A549 (cell line): ENCODE measurements at regions of chr7 and their contacts with region 1.

Region 1: DNA sequence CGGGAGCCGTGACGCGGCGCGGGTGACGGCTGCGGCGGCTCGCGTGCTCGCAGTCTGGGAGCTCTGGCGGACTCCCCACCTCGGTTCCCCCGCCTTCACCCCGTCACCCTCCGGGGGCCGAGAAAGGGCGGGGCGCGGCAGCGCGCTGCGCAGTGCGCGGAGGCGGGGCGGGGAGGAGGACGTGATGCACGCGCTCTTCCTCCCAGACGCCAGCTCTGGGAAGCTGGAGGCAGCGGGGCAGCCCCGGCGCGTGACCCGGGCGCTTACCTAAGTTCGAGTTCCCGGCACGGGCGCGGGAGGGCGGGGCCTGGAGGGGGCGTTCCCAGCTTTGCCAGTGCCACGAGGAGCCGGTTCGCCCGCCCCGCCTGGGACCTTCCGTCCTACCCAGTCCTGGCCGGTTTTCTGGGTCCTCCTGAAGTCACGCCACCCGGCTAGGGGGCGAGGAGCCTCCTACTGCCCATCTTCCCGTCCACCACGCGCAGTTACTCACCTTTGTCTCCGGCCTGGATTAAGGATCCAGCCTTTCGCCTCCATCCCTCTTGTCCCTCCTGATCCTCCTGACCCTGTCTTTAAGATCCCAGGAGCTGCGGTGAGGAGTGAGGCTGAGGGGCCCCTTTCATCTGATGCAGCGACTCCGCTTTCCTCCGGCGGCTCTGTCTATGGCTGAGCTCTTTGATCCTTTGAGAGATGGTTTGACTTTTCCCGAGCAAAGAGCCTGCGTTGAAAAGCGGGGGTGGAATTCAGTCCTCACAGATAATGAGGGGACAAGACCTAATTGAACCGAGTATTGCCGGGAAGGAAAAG is 470 bp upstream of the NAMPT start:
- DNase-seq: peak; percentile 77 to 99
- ATAC-seq: peak; percentile 86 to 90
- H3K4me3 ChIP-seq: peak overlapping the region; percentile 70
- H3K27ac ChIP-seq: peak overlapping the region; percentile 92 to 98
- H3K4me1 ChIP-seq: peaks cover 30% of the 10 kb centered on the region
- CTCF ChIP-seq: no peak
- EP300 ChIP-seq: no peak; a peak in 1 of 5 replicates
- POLR2A ChIP-seq: peak; percentile 46
- RAD21 ChIP-seq: no peak

Region 2: GRCh38 chr7:106166655-106167342 is 118.5 kb before region 1 on chr7:
- CTCF ChIA-PET with region 1: no interaction called
- POLR2A ChIA-PET with region 1: no interaction called
- DNase-seq: peak; percentile 68 to 76
- ATAC-seq: peak; percentile 70 to 92; a peak in 4 of 6 replicates
- H3K4me3 ChIP-seq: no peak overlapping the region
- H3K27ac ChIP-seq: no peak overlapping the region
- H3K4me1 ChIP-seq: no peaks in the 10 kb centered on the region
- CTCF ChIP-seq: peak; percentile 87
- EP300 ChIP-seq: no peak
- POLR2A ChIP-seq: no peak
- RAD21 ChIP-seq: peak; percentile 72 to 78

Region 3: DNA sequence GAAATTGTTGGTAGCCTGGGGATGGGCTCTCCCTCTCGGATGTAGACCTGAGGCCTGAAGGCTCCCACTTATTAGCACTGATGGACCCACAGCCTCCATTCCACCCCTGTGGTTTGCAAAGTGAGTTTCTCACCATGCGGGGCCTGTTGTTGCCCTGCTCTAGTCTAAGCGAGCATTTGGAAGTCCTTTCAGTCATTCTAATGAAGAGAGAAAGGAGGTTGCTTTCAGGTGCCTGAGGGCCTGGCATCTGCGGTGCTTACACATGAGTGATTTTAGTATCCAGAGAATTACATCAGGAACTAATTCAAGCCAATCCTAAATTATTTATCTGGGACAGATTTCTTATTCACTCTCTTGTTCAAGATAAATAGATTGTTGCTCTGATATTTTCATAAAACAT is 62.1 kb before region 1 on chr7:
- CTCF ChIA-PET with region 1: no interaction called
- POLR2A ChIA-PET with region 1: no interaction called
- DNase-seq: no peak
- ATAC-seq: no peak
- H3K4me3 ChIP-seq: no peak overlapping the region
- H3K27ac ChIP-seq: no peak overlapping the region; a peak in 1 of 6 replicates
- H3K4me1 ChIP-seq: no peaks in the 10 kb centered on the region
- CTCF ChIP-seq: no peak
- EP300 ChIP-seq: no peak
- POLR2A ChIP-seq: no peak
- RAD21 ChIP-seq: no peak

Region 4: GRCh38 chr7:106270122-106270977 is 14.9 kb before region 1 on chr7:
- CTCF ChIA-PET with region 1: interaction called, 3 read pairs
- POLR2A ChIA-PET with region 1: interaction called, 14 read pairs
- DNase-seq: no peak
- ATAC-seq: peak in 1 of 2 experiments; percentile 30; a peak in 3 of 6 replicates
- H3K4me3 ChIP-seq: no peak overlapping the region
- H3K27ac ChIP-seq: 0 out of 6 replicates have a peak overlapping the region, but pooled peaks of 1 of the 2 experiments have one; percentile 30
- H3K4me1 ChIP-seq: peaks cover 26% of the 10 kb centered on the region; the same call in 1 of the 3 replicates
- CTCF ChIP-seq: no peak
- EP300 ChIP-seq: no peak
- POLR2A ChIP-seq: no peak
- RAD21 ChIP-seq: no peak

Region 5: GRCh38 chr7:106377847-106378361 is 92.7 kb after region 1 on chr7:
- CTCF ChIA-PET with region 1: no interaction called
- POLR2A ChIA-PET with region 1: interaction called, 20 read pairs
- DNase-seq: peak; percentile 36 to 95
- ATAC-seq: peak; percentile 92 to 96
- H3K4me3 ChIP-seq: 0 out of 3 replicates have a peak overlapping the region, but pooled peaks have one; percentile 6
- H3K27ac ChIP-seq: peak overlapping the region; percentile 74 to 80
- H3K4me1 ChIP-seq: peaks cover 29% of the 10 kb centered on the region
- CTCF ChIP-seq: no peak
- EP300 ChIP-seq: peak; percentile 84 to 93; a peak in 4 of 5 replicates
- POLR2A ChIP-seq: no peak
- RAD21 ChIP-seq: peak in 1 of 2 experiments; percentile 34; a peak in 2 of 5 replicates

Region 6: DNA sequence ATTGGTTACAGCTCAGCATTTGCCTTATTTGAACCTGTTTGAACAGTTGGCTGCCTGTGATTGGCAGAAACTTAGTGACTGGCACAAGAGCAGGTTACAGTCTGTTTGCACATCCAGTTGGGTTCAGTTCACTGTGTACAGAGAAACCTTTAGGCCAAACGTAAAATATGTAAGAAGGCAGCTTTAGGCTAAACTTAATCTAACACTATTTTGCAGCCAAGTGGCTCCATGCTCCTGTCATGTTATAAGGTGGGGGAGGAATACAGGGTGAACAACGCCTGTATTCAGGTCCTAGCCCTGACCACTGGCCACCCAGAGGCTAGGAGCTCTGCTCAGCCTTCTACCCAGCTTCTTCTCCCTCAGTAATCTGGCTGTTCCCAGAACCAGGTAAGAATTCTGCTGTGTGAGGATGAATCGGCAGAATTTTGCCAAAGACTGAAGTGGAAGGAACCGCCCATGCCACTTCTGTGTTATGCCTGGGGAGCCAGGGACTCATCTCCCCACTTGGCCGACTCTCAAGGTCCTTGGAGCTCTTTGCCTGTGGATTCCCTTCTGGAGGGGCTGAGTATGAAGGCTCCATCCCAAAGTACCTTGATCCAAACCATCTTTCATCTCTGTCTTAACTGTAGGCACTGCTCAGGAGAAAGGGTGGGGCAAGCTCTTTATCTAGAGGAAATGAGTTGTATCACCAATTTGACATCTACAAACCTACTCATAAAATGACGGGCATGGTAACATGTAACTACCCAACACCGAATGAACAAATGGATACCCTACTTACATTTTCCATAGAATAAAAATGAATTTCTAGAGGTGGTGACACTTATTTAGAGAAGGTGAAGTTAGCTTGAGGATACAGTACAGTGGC is 164.0 kb after region 1 on chr7:
- CTCF ChIA-PET with region 1: no interaction called
- POLR2A ChIA-PET with region 1: interaction called, 20 read pairs
- DNase-seq: peak in 1 of 2 experiments; percentile 91
- ATAC-seq: peak; percentile 80 to 93
- H3K4me3 ChIP-seq: no peak overlapping the region
- H3K27ac ChIP-seq: peak overlapping the region; percentile 85 to 90
- H3K4me1 ChIP-seq: peaks cover 30% of the 10 kb centered on the region
- CTCF ChIP-seq: no peak
- EP300 ChIP-seq: peak in 1 of 2 experiments; percentile 15; a peak in 1 of 5 replicates
- POLR2A ChIP-seq: no peak
- RAD21 ChIP-seq: no peak